ENCODE measurements at regions of chr10 and their contacts with region 1.

Region 1: DNA sequence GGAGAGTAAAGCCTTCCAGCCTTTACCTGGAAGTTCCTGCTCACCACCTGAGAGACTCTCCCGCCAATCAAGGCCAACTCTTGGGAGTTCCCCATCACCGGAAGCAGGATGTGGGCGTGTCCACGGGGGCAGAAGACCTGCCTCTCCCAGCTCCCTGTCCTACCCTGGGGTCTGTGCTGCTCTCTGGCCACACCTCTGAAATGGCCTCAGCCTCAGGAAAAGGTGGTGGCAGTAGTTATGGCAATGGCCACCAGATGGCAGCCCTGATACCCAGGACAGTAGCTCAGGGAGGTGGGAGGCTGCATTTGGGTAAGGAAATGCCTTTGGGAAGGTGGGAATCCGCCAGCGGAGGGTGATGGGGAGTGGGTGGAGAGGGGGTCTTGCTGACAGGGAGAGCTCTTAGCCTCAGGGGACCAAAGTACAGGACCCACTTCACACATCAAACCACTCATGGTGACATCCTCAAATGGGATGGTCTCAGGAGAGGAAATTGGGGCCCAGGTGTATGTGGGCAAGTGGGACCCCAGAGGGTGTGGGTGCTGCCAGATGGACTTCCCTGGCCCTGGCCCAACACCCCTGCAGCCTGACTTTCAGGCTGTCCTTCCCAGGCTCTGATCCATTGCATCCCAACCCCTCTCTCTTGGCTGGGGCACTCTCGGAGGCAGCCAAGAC is 33.9 kb downstream of the KAZALD1 start:
- DNase-seq: peak; percentile 95 to 97
- H3K4me3 ChIP-seq: no peak overlapping the region
- H3K4me3 Mint-ChIP-seq: no peak overlapping the region
- H3K27ac Mint-ChIP-seq: no peak overlapping the region
- H3K4me1 ChIP-seq: peaks cover 35% of the 10 kb centered on the region
- H3K4me1 Mint-ChIP-seq: peaks cover 32% of the 10 kb centered on the region
- H3K27me3 ChIP-seq: no peaks in the 10 kb centered on the region
- H3K27me3 Mint-ChIP-seq: no peaks in the 10 kb centered on the region
- CTCF ChIP-seq: peak; percentile 88 to 90

Region 2: GRCh38 chr10:101060036-101060950 is 35.4 kb before region 1 on chr10:
- CTCF ChIA-PET with region 1: interaction called, 12 read pairs
- POLR2A ChIA-PET with region 1: interaction called, 4 read pairs
- intact Hi-C with region 1: loop called (anchors 2 kb)
- DNase-seq: peak; percentile 91 to 94
- H3K4me3 ChIP-seq: peak overlapping the region; percentile 76
- H3K4me3 Mint-ChIP-seq: peak overlapping the region; percentile 98
- H3K27ac Mint-ChIP-seq: peak overlapping the region; percentile 99
- H3K4me1 ChIP-seq: peaks cover 32% of the 10 kb centered on the region
- H3K4me1 Mint-ChIP-seq: peaks cover 22% of the 10 kb centered on the region
- H3K27me3 ChIP-seq: no peaks in the 10 kb centered on the region
- H3K27me3 Mint-ChIP-seq: no peaks in the 10 kb centered on the region
- CTCF ChIP-seq: peak; percentile 89 to 90

Region 3: DNA sequence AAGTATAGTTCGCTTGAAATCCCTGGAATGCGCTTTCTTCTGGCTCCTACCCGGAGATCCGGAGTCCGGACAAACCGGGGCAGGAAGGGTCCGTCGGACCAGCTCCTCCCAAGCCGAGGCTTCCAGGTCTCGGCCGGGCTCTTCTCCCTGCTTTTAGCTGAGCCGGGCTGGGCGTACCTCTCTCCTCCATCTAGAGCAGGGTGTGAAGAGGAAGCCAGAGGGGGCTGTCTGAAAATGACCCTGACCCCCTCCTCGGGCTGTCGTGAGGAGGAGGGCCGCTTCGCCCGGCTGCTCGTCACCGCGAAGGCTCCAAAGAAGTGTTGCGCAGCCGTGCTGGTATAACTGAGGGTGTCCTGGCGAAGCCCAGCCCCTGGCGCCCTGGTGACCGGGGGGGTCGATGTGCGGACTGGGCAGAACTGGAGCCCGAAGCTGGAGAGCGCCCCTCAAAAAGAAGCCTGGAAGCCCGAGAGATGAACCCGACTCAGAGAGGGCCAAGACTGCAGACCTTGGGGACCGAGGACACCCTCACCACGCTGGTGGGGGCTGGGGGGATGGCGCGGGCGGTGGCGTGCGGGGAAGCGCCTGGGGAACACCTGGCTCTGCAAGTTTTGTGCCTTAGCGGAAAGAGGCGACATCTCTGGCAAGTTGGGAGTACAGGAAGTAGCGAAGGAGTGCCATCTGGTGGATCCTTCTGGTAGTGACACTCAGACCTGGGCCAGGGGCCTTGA is 28.2 kb before region 1 on chr10:
- CTCF ChIA-PET with region 1: interaction called, 13 read pairs
- POLR2A ChIA-PET with region 1: interaction called, 5 read pairs
- intact Hi-C with region 1: no loop called
- DNase-seq: peak; percentile 90
- H3K4me3 ChIP-seq: peak overlapping the region; percentile 70
- H3K4me3 Mint-ChIP-seq: peak overlapping the region; percentile 96
- H3K27ac Mint-ChIP-seq: peak overlapping the region; percentile 98
- H3K4me1 ChIP-seq: peaks cover 30% of the 10 kb centered on the region
- H3K4me1 Mint-ChIP-seq: peaks cover 22% of the 10 kb centered on the region
- H3K27me3 ChIP-seq: no peaks in the 10 kb centered on the region
- H3K27me3 Mint-ChIP-seq: no peaks in the 10 kb centered on the region
- CTCF ChIP-seq: peak; percentile 86 to 92

Region 4: DNA sequence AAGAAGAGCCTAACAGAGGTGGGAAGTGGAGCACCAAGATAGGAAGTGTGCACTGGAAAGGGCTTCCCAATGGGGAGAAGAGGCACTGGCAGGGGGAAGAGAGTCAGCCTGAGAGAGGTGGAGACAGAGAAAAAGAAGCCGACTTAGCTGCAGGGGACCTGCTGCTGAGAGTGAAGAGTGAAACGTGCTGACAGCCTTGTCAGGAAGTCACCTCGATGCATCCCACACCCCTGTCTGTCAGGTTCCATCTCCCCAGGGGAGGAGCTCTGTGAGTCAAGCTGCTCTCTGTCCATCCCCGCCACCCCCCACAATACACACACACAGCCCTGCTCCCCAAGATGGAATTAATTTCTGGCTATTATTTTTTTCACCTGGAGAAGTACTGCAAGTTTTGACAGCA is 19.9 kb before region 1 on chr10:
- CTCF ChIA-PET with region 1: interaction called, 17 read pairs
- POLR2A ChIA-PET with region 1: no interaction called
- intact Hi-C with region 1: no loop called
- DNase-seq: no peak
- H3K4me3 ChIP-seq: no peak overlapping the region
- H3K4me3 Mint-ChIP-seq: no peak overlapping the region
- H3K27ac Mint-ChIP-seq: no peak overlapping the region
- H3K4me1 ChIP-seq: no peaks in the 10 kb centered on the region
- H3K4me1 Mint-ChIP-seq: no peaks in the 10 kb centered on the region
- H3K27me3 ChIP-seq: no peaks in the 10 kb centered on the region
- H3K27me3 Mint-ChIP-seq: peaks cover 8% of the 10 kb centered on the region
- CTCF ChIP-seq: no peak

Region 5: GRCh38 chr10:101110856-101111546 is 15.3 kb after region 1 on chr10:
- CTCF ChIA-PET with region 1: interaction called, 60 read pairs
- POLR2A ChIA-PET with region 1: no interaction called
- intact Hi-C with region 1: loop called (anchors 1 kb)
- DNase-seq: peak; percentile 76 to 78
- H3K4me3 ChIP-seq: no peak overlapping the region
- H3K4me3 Mint-ChIP-seq: peak overlapping the region; percentile 44
- H3K27ac Mint-ChIP-seq: peak overlapping the region; percentile 92
- H3K4me1 ChIP-seq: peaks cover 30% of the 10 kb centered on the region
- H3K4me1 Mint-ChIP-seq: peaks cover 36% of the 10 kb centered on the region
- H3K27me3 ChIP-seq: no peaks in the 10 kb centered on the region
- H3K27me3 Mint-ChIP-seq: no peaks in the 10 kb centered on the region
- CTCF ChIP-seq: no peak

Region 6: GRCh38 chr10:101130984-101131961 is 35.6 kb after region 1 on chr10 and contains the start of gene TLX1:
- CTCF ChIA-PET with region 1: interaction called, 541 read pairs
- POLR2A ChIA-PET with region 1: interaction called, 7 read pairs
- intact Hi-C with region 1: no loop called
- DNase-seq: peak; percentile 62 to 66
- H3K4me3 ChIP-seq: peak within 1 kb of the TSS; percentile 51
- H3K4me3 Mint-ChIP-seq: peak within 1 kb of the TSS; percentile 69
- H3K27ac Mint-ChIP-seq: no peak within 1 kb of the TSS
- H3K4me1 ChIP-seq: peaks cover 23% of the 10 kb centered on the region
- H3K4me1 Mint-ChIP-seq: peaks cover 12% of the 10 kb centered on the region
- H3K27me3 ChIP-seq: no peaks in the 10 kb centered on the region
- H3K27me3 Mint-ChIP-seq: no peaks in the 10 kb centered on the region
- CTCF ChIP-seq: peak in 1 of 2 experiments; percentile 21
- total RNA-seq, gene TLX1: 1.9 and 2.3 TPM in 2 replicates

Region 7: GRCh38 chr10:101301249-101301711 is 205.6 kb after region 1 on chr10:
- CTCF ChIA-PET with region 1: no interaction called
- POLR2A ChIA-PET with region 1: no interaction called
- intact Hi-C with region 1: no loop called
- DNase-seq: peak; percentile 68 to 74
- H3K4me3 ChIP-seq: no peak overlapping the region
- H3K4me3 Mint-ChIP-seq: no peak overlapping the region
- H3K27ac Mint-ChIP-seq: no peak overlapping the region
- H3K4me1 ChIP-seq: no peaks in the 10 kb centered on the region
- H3K4me1 Mint-ChIP-seq: peaks cover 6% of the 10 kb centered on the region
- H3K27me3 ChIP-seq: peaks cover 3% of the 10 kb centered on the region
- H3K27me3 Mint-ChIP-seq: peaks cover 37% of the 10 kb centered on the region
- CTCF ChIP-seq: peak; percentile 58 to 81

Measured in Caco-2 (cell line).